Activated CD4-positive, alpha-beta memory T cell treated with anti-CD3 and anti-CD28 coated beads for 36 hours (primary cell): ENCODE measurements at regions of chr19 and their contacts with region 1.

Region 1: GRCh38 chr19:45770192-45771101 is 1.4 kb upstream of the SIX5 start:
- DNase-seq: peak; percentile 92
- H3K4me3 Mint-ChIP-seq: peak overlapping the region; percentile 78
- H3K27ac Mint-ChIP-seq: peak overlapping the region; percentile 28
- H3K4me1 Mint-ChIP-seq: peaks cover 10% of the 10 kb centered on the region
- H3K27me3 Mint-ChIP-seq: peaks cover 9% of the 10 kb centered on the region

Region 2: DNA sequence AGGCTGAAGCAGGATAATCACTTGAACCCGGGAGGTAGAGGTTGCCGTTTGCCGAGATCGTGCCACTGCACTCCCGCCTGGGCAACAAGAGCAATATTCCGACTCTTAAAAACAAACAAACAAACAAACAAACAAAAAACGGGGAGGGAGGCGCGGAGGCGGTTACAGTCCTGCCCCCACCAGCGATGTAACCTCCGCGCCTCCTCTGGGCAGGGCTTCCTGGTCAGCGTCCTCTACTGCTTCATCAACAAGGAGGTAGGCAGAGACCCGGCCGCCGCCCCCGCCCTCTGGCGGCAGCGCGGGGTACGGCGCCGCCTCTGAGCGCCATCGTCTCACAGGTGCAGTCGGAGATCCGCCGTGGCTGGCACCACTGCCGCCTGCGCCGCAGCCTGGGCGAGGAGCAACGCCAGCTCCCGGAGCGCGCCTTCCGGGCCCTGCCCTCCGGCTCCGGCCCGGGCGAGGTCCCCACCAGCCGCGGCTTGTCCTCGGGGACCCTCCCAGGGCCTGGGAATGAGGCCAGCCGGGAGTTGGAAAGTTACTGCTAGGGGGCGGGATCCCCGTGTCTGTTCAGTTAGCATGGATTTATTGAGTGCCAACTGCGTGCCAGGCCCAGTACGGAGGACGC is 88.9 kb before region 1 on chr19:
- CTCF ChIA-PET with region 1: no interaction called
- POLR2A ChIA-PET with region 1: no interaction called
- intact Hi-C with region 1: no loop called
- DNase-seq: peak; percentile 93
- H3K4me3 Mint-ChIP-seq: peak overlapping the region; percentile 73
- H3K27ac Mint-ChIP-seq: no peak overlapping the region
- H3K4me1 Mint-ChIP-seq: peaks cover 19% of the 10 kb centered on the region
- H3K27me3 Mint-ChIP-seq: no peaks in the 10 kb centered on the region

Region 3: GRCh38 chr19:45730389-45731288 is 39.8 kb before region 1 on chr19 and contains the start of gene FBXO46:
- CTCF ChIA-PET with region 1: interaction called, 19 read pairs
- POLR2A ChIA-PET with region 1: interaction called, 5 read pairs
- intact Hi-C with region 1: loop called (anchors 2 kb)
- DNase-seq: peak; percentile 98
- H3K4me3 Mint-ChIP-seq: peak within 1 kb of the TSS; percentile 98
- H3K27ac Mint-ChIP-seq: peak within 1 kb of the TSS; percentile 81
- H3K4me1 Mint-ChIP-seq: peaks cover 30% of the 10 kb centered on the region
- H3K27me3 Mint-ChIP-seq: no peaks in the 10 kb centered on the region
- total RNA-seq, gene FBXO46: 26.1 to 29.4 TPM

Region 4: GRCh38 chr19:45792470-45793177 is 22.2 kb after region 1 on chr19 and contains the start of gene DMWD:
- CTCF ChIA-PET with region 1: interaction called, 121 read pairs
- POLR2A ChIA-PET with region 1: interaction called, 3 read pairs
- intact Hi-C with region 1: loop called (anchors 1 kb)
- DNase-seq: peak; percentile 100
- H3K4me3 Mint-ChIP-seq: peak within 1 kb of the TSS; percentile 94
- H3K27ac Mint-ChIP-seq: peak within 1 kb of the TSS; percentile 79
- H3K4me1 Mint-ChIP-seq: peaks cover 30% of the 10 kb centered on the region
- H3K27me3 Mint-ChIP-seq: peaks cover 18% of the 10 kb centered on the region
- total RNA-seq, gene DMWD: 43.1 to 45.8 TPM

Region 5: GRCh38 chr19:45798995-45799517 is 28.6 kb after region 1 on chr19:
- CTCF ChIA-PET with region 1: interaction called, 121 read pairs
- POLR2A ChIA-PET with region 1: interaction called, 10 read pairs
- intact Hi-C with region 1: loop called (anchors 1 kb)
- DNase-seq: peak; percentile 71
- H3K4me3 Mint-ChIP-seq: peak overlapping the region; percentile 3
- H3K27ac Mint-ChIP-seq: peak overlapping the region; percentile 23
- H3K4me1 Mint-ChIP-seq: peaks cover 10% of the 10 kb centered on the region
- H3K27me3 Mint-ChIP-seq: peaks cover 34% of the 10 kb centered on the region

Region 6: GRCh38 chr19:45886427-45887199 is 116.2 kb after region 1 on chr19:
- CTCF ChIA-PET with region 1: interaction called, 10 read pairs
- POLR2A ChIA-PET with region 1: interaction called, 4 read pairs
- intact Hi-C with region 1: loop called (anchors 1 kb)
- DNase-seq: peak; percentile 95
- H3K4me3 Mint-ChIP-seq: peak overlapping the region; percentile 85
- H3K27ac Mint-ChIP-seq: peak overlapping the region; percentile 92
- H3K4me1 Mint-ChIP-seq: peaks cover 22% of the 10 kb centered on the region
- H3K27me3 Mint-ChIP-seq: no peaks in the 10 kb centered on the region